WTC11 (cell line): ENCODE measurements at regions of chr13 and their contacts with region 1.

Region 1: GRCh38 chr13:19984430-19985218 is 26.1 kb downstream of the ZMYM2 start:
- DNase-seq: no peak
- ATAC-seq: peak; percentile 80
- H3K4me3 Mint-ChIP-seq: no peak overlapping the region
- H3K27ac Mint-ChIP-seq: peak overlapping the region; percentile 53; the same call in 1 of the 2 replicates
- H3K4me1 Mint-ChIP-seq: peaks cover 57% of the 10 kb centered on the region
- H3K27me3 Mint-ChIP-seq: no peaks in the 10 kb centered on the region
- CTCF ChIP-seq: peak; percentile 42; the same call in 1 of the 2 replicates

Region 2: GRCh38 chr13:19959831-19960652 is 24.6 kb before region 1 on chr13:
- CTCF ChIA-PET with region 1: interaction called, 13 read pairs
- POLR2A ChIA-PET with region 1: no interaction called
- DNase-seq: peak; percentile 78
- ATAC-seq: peak; percentile 55
- H3K4me3 Mint-ChIP-seq: peak overlapping the region; percentile 96
- H3K27ac Mint-ChIP-seq: peak overlapping the region; percentile 95
- H3K4me1 Mint-ChIP-seq: peaks cover 30% of the 10 kb centered on the region
- H3K27me3 Mint-ChIP-seq: no peaks in the 10 kb centered on the region; the same call in 1 of the 2 replicates
- CTCF ChIP-seq: peak; percentile 43

Region 3: DNA sequence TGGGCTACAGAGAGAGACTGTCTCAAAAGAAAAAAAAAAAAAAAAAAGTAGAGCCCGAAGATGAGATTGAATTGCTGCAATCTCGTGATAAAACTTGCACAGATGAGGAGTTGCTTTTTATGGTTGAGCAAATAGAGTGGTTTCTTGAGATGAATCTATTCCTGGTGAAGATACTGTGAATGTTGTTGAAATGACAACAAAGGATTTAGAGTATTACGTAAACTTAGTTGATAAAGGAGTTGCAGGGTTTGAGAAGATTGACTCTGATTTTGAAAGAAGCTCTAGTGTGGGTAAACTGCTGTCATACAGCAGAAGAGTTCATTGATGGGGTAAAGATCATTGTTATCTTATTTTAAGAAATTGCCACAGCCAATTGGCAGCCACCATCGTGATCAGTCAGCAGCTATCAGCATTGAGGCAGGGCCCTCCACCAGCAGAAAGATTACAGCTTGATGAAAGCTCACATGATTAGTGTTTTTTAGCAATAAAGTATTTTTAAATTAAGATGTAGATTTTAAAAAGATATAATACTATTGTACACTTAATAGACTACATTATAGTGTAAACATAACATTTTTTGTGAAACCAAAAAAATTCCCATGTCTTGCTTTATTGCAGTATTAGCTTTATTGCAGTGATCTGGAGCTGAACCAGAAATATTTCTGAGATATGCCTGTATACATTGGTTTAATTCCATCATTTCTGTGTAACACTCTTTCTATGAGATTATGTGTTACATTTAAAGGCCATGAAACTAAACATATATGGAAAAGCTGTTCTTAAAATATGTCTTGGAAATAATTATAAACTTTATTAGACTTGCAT is 17.0 kb after region 1 on chr13:
- CTCF ChIA-PET with region 1: interaction called, 18 read pairs
- POLR2A ChIA-PET with region 1: interaction called, 4 read pairs
- DNase-seq: no peak
- ATAC-seq: no peak
- H3K4me3 Mint-ChIP-seq: no peak overlapping the region
- H3K27ac Mint-ChIP-seq: peak overlapping the region; percentile 48; the same call in 1 of the 2 replicates
- H3K4me1 Mint-ChIP-seq: no peaks in the 10 kb centered on the region
- H3K27me3 Mint-ChIP-seq: no peaks in the 10 kb centered on the region
- CTCF ChIP-seq: no peak